Activated CD4-positive, alpha-beta T cell treated with anti-CD3 and anti-CD28 coated beads for 36 hours (primary cell): ENCODE measurements at regions of chr19 and their contacts with region 1.

Region 1: DNA sequence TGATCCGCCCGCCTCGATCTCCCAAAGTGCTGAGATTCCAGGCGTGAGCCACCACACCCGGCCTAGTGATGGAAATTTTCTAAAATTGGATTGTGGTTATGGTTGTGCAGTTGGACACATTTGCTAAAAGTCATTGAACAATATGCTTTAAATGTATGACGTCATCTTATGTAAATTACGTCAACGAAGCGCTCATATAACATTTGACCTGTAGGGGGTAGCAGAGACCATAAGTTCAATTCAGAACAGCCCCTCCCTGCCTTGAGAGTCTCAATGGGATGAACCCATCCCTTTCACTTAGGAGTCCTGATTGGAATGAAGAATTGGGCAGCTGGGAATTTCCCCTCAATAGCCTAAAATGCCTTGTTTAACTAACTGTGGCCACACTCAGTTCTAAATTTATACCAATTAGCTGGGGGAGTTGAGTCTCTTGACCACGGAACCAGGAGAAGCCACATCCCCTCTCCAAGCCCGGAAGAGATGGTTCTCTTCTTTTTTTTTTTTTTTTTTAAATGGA is 15.3 kb upstream of the TLE6 start:
- DNase-seq: peak; percentile 64
- ATAC-seq: peak; percentile 84
- H3K4me3 Mint-ChIP-seq: peak overlapping the region; percentile 38
- H3K27ac Mint-ChIP-seq: peak overlapping the region; percentile 65
- H3K4me1 Mint-ChIP-seq: peaks cover 5% of the 10 kb centered on the region
- H3K27me3 Mint-ChIP-seq: no peaks in the 10 kb centered on the region

Region 2: GRCh38 chr19:2578901-2579677 is 383.0 kb before region 1 on chr19:
- CTCF ChIA-PET with region 1: no interaction called
- POLR2A ChIA-PET with region 1: no interaction called
- intact Hi-C with region 1: no loop called
- DNase-seq: peak; percentile 81
- ATAC-seq: peak; percentile 69
- H3K4me3 Mint-ChIP-seq: no peak overlapping the region
- H3K27ac Mint-ChIP-seq: no peak overlapping the region
- H3K4me1 Mint-ChIP-seq: no peaks in the 10 kb centered on the region
- H3K27me3 Mint-ChIP-seq: peaks cover 8% of the 10 kb centered on the region

Region 3: GRCh38 chr19:3062168-3063102 is 100.3 kb after region 1 on chr19 and contains the start of gene TLE5:
- CTCF ChIA-PET with region 1: interaction called, 3 read pairs
- POLR2A ChIA-PET with region 1: no interaction called
- intact Hi-C with region 1: loop called (anchors 1 to 5 kb)
- DNase-seq: peak; percentile 83
- ATAC-seq: peak; percentile 71
- H3K4me3 Mint-ChIP-seq: peak within 1 kb of the TSS; percentile 82
- H3K27ac Mint-ChIP-seq: peak within 1 kb of the TSS; percentile 97
- H3K4me1 Mint-ChIP-seq: peaks cover 35% of the 10 kb centered on the region
- H3K27me3 Mint-ChIP-seq: no peaks in the 10 kb centered on the region
- total RNA-seq, gene TLE5: 349 to 533 TPM

Region 4: GRCh38 chr19:3100865-3101730 is 139.0 kb after region 1 on chr19:
- CTCF ChIA-PET with region 1: interaction called, 28 read pairs
- POLR2A ChIA-PET with region 1: no interaction called
- intact Hi-C with region 1: loop called (anchors 1 kb)
- DNase-seq: no peak
- ATAC-seq: no peak
- H3K4me3 Mint-ChIP-seq: no peak overlapping the region
- H3K27ac Mint-ChIP-seq: no peak overlapping the region
- H3K4me1 Mint-ChIP-seq: peaks cover 23% of the 10 kb centered on the region
- H3K27me3 Mint-ChIP-seq: no peaks in the 10 kb centered on the region

Region 5: GRCh38 chr19:3125900-3126524 is 163.9 kb after region 1 on chr19:
- CTCF ChIA-PET with region 1: interaction called, 6 read pairs
- POLR2A ChIA-PET with region 1: interaction called, 3 read pairs
- intact Hi-C with region 1: loop called in 1 of 2 experiments (anchors 1 kb)
- DNase-seq: peak; percentile 93
- ATAC-seq: peak; percentile 97
- H3K4me3 Mint-ChIP-seq: no peak overlapping the region
- H3K27ac Mint-ChIP-seq: no peak overlapping the region
- H3K4me1 Mint-ChIP-seq: peaks cover 4% of the 10 kb centered on the region
- H3K27me3 Mint-ChIP-seq: no peaks in the 10 kb centered on the region

Region 6: GRCh38 chr19:3210347-3211017 is 248.4 kb after region 1 on chr19:
- CTCF ChIA-PET with region 1: interaction called, 3 read pairs
- POLR2A ChIA-PET with region 1: no interaction called
- intact Hi-C with region 1: loop called in 1 of 2 experiments (anchors 1 kb)
- DNase-seq: peak; percentile 86
- ATAC-seq: peak; percentile 98
- H3K4me3 Mint-ChIP-seq: no peak overlapping the region
- H3K27ac Mint-ChIP-seq: no peak overlapping the region
- H3K4me1 Mint-ChIP-seq: no peaks in the 10 kb centered on the region
- H3K27me3 Mint-ChIP-seq: no peaks in the 10 kb centered on the region